ENCODE measurements at regions of chr19 and their contacts with region 1.

Region 1: GRCh38 chr19:12551060-12551832 is at the start of gene ZNF564:
- DNase-seq: peak; percentile 85 to 98 (median 92)
- ATAC-seq: peak; percentile 98
- H3K4me3 ChIP-seq: peak within 1 kb of the TSS; percentile 59 to 94
- H3K4me3 Mint-ChIP-seq: peak within 1 kb of the TSS; percentile 98
- H3K27ac ChIP-seq: peak within 1 kb of the TSS; percentile 88 to 91
- H3K27ac Mint-ChIP-seq: peak within 1 kb of the TSS; percentile 97
- H3K4me1 ChIP-seq: peaks cover 25% of the 10 kb centered on the region
- H3K4me1 Mint-ChIP-seq: peaks cover 51% of the 10 kb centered on the region
- H3K27me3 ChIP-seq: no peaks in the 10 kb centered on the region
- H3K27me3 Mint-ChIP-seq: no peaks in the 10 kb centered on the region
- CTCF ChIP-seq: no peak
- total RNA-seq, gene ZNF564: 17.8 to 18.2 TPM

Region 2: DNA sequence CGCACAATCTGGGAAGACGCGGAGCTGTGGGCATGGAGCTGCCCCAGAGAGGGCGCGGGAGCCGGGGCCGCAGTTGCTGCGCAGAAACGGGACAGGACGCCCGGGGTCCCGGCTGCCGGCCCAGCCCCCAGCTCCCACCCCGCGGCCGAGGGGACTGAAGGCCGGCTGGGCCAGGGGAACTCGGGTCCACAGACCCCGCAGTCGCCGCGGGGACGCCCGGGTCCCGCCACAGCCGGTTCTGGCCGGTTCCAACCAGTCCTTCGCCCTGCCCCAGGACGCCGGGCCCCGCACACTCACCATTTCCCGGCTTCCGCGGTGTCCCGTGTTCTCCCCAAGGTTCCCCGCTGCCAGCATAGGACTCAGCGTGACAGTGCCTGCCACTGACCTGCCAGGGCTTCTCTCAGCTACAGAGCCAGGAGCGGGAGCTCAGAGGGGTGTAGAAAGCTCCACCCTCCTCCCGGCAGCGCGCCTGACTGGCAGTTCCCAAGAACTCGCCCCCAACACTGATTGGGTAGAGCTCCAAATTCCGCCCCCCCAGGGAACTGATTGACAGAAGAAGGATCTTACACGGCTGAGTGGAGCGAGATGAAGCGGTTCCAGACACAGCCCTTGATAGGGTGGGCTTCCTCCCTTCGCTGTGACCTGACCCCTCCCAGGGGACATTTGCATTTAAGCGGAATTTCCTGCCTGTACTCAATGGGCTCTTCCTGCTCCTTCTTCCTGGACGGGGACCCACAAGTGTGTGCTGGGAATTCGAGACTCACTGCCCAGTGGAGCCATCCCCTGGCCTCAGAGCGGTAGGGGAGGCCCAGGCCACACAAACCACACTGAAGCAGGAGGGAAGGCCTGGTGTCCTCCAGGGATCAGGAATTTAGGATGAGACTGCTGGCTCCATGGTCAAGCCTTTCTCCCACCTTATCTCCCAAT is 185.7 kb before region 1 on chr19 and contains the start of gene ZNF442:
- CTCF ChIA-PET with region 1: no interaction called
- POLR2A ChIA-PET with region 1: no interaction called
- intact Hi-C with region 1: loop called in 1 of 2 experiments (anchors 1 kb)
- DNase-seq: peak; percentile 54 to 91 (median 85)
- ATAC-seq: peak; percentile 98
- H3K4me3 ChIP-seq: peak within 1 kb of the TSS; percentile 64 to 65
- H3K4me3 Mint-ChIP-seq: peak within 1 kb of the TSS; percentile 97
- H3K27ac ChIP-seq: peak within 1 kb of the TSS in 1 of 2 experiments; percentile 34
- H3K27ac Mint-ChIP-seq: peak within 1 kb of the TSS; percentile 84
- H3K4me1 ChIP-seq: peaks cover 13% of the 10 kb centered on the region
- H3K4me1 Mint-ChIP-seq: peaks cover 24% of the 10 kb centered on the region
- H3K27me3 ChIP-seq: peaks cover 0 to 2% of the 10 kb centered on the region in 2 experiments
- H3K27me3 Mint-ChIP-seq: no peaks in the 10 kb centered on the region
- CTCF ChIP-seq: no peak
- total RNA-seq, gene ZNF442: 1.00 to 1.0 TPM

Region 3: GRCh38 chr19:12484371-12485051 is 66.7 kb before region 1 on chr19 and contains the start of gene ZNF709:
- CTCF ChIA-PET with region 1: no interaction called
- POLR2A ChIA-PET with region 1: no interaction called
- intact Hi-C with region 1: loop called (anchors 1 kb)
- DNase-seq: peak; percentile 78 to 93 (median 90)
- ATAC-seq: peak; percentile 98
- H3K4me3 ChIP-seq: peak within 1 kb of the TSS; percentile 92 to 93
- H3K4me3 Mint-ChIP-seq: peak within 1 kb of the TSS; percentile 94
- H3K27ac ChIP-seq: peak within 1 kb of the TSS; percentile 73 to 76
- H3K27ac Mint-ChIP-seq: peak within 1 kb of the TSS; percentile 94
- H3K4me1 ChIP-seq: peaks cover 23% of the 10 kb centered on the region
- H3K4me1 Mint-ChIP-seq: peaks cover 31% of the 10 kb centered on the region
- H3K27me3 ChIP-seq: no peaks in the 10 kb centered on the region
- H3K27me3 Mint-ChIP-seq: no peaks in the 10 kb centered on the region
- CTCF ChIP-seq: no peak
- total RNA-seq, gene ZNF709: 4.3 to 4.5 TPM

Region 4: DNA sequence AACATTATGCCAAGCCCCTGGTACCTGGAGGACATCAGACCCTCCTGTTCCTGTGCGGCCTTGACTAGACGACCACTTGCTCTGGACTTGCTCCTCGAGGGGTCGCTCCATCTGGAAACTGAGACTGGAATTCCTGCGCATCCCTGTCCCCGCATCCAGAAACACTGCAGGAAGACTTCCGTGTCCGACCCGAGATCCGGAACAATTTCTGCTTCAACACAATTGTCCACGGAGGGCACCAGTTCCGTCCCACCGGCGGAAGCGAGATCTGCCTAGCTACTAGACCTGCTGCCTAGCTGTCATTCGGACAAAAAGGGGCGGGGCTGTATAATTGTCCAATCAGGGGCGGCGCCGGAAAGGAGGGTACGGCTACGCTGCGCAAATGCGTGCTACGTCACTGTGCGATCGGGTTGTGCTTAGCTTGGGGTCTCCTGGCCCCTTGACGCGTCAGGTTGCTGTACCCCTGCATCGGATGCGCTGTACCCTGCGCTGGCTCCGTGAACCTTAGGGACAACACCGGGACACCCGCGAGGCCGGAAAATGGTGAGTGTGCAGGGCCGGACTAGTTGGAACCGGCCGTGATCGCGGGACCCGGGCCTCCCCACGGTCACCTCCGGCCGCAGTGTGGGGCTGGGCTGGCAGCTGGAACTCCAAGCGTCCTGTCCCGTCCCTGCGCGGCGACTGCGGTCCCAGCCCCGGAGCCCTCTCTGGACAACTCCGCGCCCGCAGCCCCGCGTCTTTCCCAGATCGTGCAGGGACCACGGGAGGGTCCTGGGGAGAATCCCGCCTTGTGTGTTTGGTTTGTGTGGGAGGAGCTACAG is 59.5 kb after region 1 on chr19 and contains the starts of genes ZNF490 and ZNF791:
- CTCF ChIA-PET with region 1: no interaction called
- POLR2A ChIA-PET with region 1: interaction called, 4 read pairs
- intact Hi-C with region 1: loop called (anchors 1 kb)
- DNase-seq: peak; percentile 93 to 98 (median 96)
- ATAC-seq: peak; percentile 86
- H3K4me3 ChIP-seq: peak within 1 kb of the TSS; percentile 83 to 85
- H3K4me3 Mint-ChIP-seq: peak within 1 kb of the TSS; percentile 100
- H3K27ac ChIP-seq: peak within 1 kb of the TSS; percentile 87 to 90
- H3K27ac Mint-ChIP-seq: peak within 1 kb of the TSS; percentile 100
- H3K4me1 ChIP-seq: peaks cover 44% of the 10 kb centered on the region
- H3K4me1 Mint-ChIP-seq: peaks cover 47% of the 10 kb centered on the region
- H3K27me3 ChIP-seq: no peaks in the 10 kb centered on the region
- H3K27me3 Mint-ChIP-seq: no peaks in the 10 kb centered on the region
- CTCF ChIP-seq: no peak
- total RNA-seq, gene ZNF490: 5.1 to 7.0 TPM
- total RNA-seq, gene ZNF791: 61.0 to 67.0 TPM

Region 5: GRCh38 chr19:12736995-12737834 is 186.0 kb after region 1 on chr19 and contains the start of gene GET3:
- CTCF ChIA-PET with region 1: no interaction called
- POLR2A ChIA-PET with region 1: no interaction called
- intact Hi-C with region 1: loop called in 1 of 2 experiments (anchors 5 kb)
- DNase-seq: peak; percentile 59 to 94 (median 82)
- ATAC-seq: peak; percentile 78
- H3K4me3 ChIP-seq: peak within 1 kb of the TSS; percentile 70 to 81
- H3K4me3 Mint-ChIP-seq: peak within 1 kb of the TSS; percentile 99
- H3K27ac ChIP-seq: peak within 1 kb of the TSS; percentile 70 to 87
- H3K27ac Mint-ChIP-seq: peak within 1 kb of the TSS; percentile 92
- H3K4me1 ChIP-seq: peaks cover 39% of the 10 kb centered on the region
- H3K4me1 Mint-ChIP-seq: peaks cover 41% of the 10 kb centered on the region
- H3K27me3 ChIP-seq: no peaks in the 10 kb centered on the region
- H3K27me3 Mint-ChIP-seq: no peaks in the 10 kb centered on the region
- CTCF ChIP-seq: no peak
- total RNA-seq, gene GET3: 17.6 to 19.8 TPM